ENCODE measurements at regions of chr9 and their contacts with region 1.

Region 1: DNA sequence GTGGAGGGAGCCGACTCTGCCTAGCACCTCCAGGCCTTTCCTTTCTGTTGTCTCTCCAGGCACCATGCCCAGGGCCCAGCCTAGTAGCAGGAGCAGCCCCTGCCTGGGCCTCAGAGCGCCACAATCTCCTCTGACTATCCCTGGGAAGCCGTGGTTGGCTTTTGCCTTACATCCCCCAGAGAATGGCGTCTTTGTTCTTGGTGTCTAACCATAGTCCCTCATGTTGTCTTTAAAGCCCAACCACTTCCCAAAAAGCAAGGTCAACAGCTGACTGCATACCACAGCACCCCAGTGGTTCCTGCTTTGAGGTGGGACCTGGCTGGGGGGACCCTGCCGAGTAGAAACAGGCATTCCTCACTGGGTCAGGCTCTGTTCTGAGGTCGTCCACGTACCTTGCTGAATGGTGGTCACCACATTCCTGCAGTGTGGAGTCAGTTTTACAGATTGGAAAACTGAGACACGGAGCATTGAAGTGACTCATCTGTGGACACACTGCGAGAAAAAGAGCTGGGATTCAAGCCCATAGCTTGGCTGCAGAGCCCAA is 13.7 kb upstream of the CERCAM start:
- DNase-seq: no peak
- ATAC-seq: no peak
- H3K4me3 Mint-ChIP-seq: no peak overlapping the region
- H3K27ac Mint-ChIP-seq: no peak overlapping the region
- H3K4me1 Mint-ChIP-seq: no peaks in the 10 kb centered on the region
- H3K27me3 Mint-ChIP-seq: peaks cover 23% of the 10 kb centered on the region
- CTCF ChIP-seq: no peak

Region 2: GRCh38 chr9:128389395-128390149 is 17.3 kb before region 1 on chr9:
- CTCF ChIA-PET with region 1: no interaction called
- POLR2A ChIA-PET with region 1: no interaction called
- intact Hi-C with region 1: no loop called
- DNase-seq: no peak
- ATAC-seq: no peak
- H3K4me3 Mint-ChIP-seq: no peak overlapping the region
- H3K27ac Mint-ChIP-seq: no peak overlapping the region
- H3K4me1 Mint-ChIP-seq: no peaks in the 10 kb centered on the region
- H3K27me3 Mint-ChIP-seq: no peaks in the 10 kb centered on the region
- CTCF ChIP-seq: no peak

Region 3: DNA sequence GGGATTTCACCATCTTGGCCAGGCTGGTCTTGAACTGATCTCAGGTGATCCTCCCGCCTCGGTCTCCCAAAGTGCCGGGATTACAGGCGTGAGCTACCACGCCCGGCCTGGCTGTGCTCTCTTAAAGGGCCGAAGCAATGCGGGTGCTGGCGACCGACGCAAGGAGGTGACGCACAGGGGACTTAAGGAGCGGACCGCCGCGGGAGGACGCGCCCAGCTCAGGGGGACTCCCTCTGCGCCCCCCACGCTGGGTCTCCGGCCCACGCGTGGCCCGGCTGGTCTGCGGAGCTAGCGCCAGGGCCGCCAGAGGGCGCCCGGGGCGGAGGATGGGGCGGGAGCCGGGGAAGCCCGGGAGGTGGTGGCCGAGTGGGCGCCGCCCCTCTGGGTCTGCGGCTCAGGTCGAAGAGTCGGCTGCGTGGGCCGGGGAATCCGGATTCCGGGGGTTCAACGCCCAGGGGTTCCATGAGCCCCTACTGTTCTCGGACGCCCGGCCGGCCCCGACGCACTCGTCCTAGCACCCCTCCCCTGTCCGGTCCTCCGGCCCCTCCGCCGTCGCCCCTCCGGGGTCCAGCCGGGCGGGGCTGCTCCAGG is 13.2 kb after region 1 on chr9:
- CTCF ChIA-PET with region 1: interaction called, 16 read pairs
- POLR2A ChIA-PET with region 1: interaction called, 4 read pairs
- intact Hi-C with region 1: no loop called
- DNase-seq: peak; percentile 78
- ATAC-seq: peak; percentile 83
- H3K4me3 Mint-ChIP-seq: peak overlapping the region; percentile 73
- H3K27ac Mint-ChIP-seq: no peak overlapping the region
- H3K4me1 Mint-ChIP-seq: peaks cover 6% of the 10 kb centered on the region
- H3K27me3 Mint-ChIP-seq: peaks cover 22% of the 10 kb centered on the region
- CTCF ChIP-seq: peak; percentile 85

Measured in activated CD8-positive, alpha-beta T cell treated with anti-CD3 and anti-CD28 coated beads for 36 hours (primary cell).